Tibial artery (tissue), 4 donors: ENCODE measurements at regions of chr5 and their contacts with region 1.

Region 1: DNA sequence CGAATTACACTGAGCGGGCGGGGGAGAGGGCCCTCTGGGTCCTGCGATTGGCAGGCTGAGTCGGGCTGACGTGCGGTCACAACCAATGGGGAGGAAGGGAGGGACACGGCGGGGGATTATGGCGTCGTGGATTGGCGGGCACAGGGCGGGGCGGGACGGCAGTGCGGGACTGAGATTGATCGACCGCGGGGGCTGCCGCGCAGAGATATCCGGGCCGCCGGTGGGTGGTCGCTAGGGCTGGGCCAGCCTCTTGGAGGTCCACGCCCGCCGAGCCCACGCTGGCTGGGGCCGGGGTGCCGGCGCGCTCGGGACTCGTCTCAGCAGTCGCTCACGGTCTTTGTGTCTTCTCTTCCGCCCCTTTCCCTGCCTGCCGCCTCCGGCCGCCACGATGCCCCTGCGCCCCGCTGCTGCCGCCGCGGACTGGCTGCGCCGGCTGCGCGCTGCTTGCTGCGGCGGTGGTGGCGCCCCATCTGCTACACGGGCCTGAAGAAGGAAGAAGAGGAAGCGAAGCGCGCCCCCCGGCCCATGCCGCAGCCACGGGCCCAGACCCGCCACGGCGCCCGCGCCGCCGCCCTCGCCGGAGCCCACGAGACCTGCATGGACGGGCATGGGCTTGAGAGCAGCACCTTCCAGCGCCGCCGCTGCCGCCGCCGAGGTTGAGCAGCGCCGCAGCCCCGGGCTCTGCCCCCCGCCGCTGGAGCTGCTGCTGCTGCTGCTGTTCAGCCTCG is at the start of gene RGMB:
- DNase-seq: peak; percentile 98 to 99
- H3K4me3 ChIP-seq: peak within 1 kb of the TSS; percentile 65 to 71
- H3K27ac ChIP-seq: peak within 1 kb of the TSS; percentile 85 to 90
- H3K4me1 ChIP-seq: peaks cover 0 to 35% (median 18%) of the 10 kb centered on the region in 4 donors
- H3K27me3 ChIP-seq: no peaks in the 10 kb centered on the region
- CTCF ChIP-seq: peak in 1 of 2 experiments; percentile 24

Region 2: DNA sequence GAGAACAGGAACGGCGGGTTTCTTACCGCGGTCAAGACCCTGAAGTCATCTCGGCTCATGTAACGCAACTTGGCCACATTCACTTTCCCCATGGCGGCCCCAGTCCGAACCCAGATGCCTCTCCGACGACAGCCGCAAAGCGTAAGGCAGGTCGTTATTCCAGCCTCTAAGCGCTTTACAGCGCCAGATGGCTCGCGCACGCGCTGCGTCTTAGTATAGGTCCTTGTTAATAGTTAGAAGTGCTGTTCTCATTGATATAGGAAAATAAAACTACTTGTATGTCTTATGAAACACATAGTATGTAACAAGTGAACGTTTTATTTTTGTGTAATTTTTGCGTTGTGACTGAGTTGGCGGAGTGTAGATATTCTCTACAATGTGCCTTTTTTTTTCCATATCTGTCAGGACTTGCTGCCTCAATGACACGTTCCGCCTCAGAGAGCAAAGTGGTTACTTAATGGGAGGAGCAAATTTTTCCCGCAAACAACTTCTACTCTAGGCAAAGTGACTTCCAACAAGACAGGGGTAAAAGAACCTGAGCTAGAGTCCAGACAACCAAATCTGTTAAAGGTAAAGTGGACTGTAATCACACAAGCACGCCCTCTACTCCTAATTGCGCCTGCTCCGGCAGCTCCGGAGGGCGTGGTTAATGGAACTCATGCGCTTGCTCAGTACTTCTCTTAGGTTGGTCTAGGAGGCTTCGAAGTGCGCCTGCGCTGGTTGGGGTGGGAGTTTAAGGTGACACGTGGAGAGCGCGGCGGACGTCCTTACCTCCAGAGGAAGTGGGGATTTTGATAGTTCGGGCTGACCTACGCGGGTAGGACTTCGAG is 1590.3 kb before region 1 on chr5 and contains the start of gene RIOK2:
- intact Hi-C with region 1: loop called (anchors 5 kb)
- DNase-seq: peak; percentile 92 to 94
- H3K4me3 ChIP-seq: peak within 1 kb of the TSS; percentile 71 to 75
- H3K27ac ChIP-seq: peak within 1 kb of the TSS; percentile 81 to 84
- H3K4me1 ChIP-seq: peaks cover 0 to 29% (median 11%) of the 10 kb centered on the region in 4 donors
- H3K27me3 ChIP-seq: no peaks in the 10 kb centered on the region
- CTCF ChIP-seq: no peak

Region 3: GRCh38 chr5:98588215-98588614 is 185.4 kb before region 1 on chr5:
- intact Hi-C with region 1: no loop called
- DNase-seq: no peak
- H3K4me3 ChIP-seq: no peak overlapping the region
- H3K27ac ChIP-seq: no peak overlapping the region
- H3K4me1 ChIP-seq: no peaks in the 10 kb centered on the region
- H3K27me3 ChIP-seq: no peaks in the 10 kb centered on the region
- CTCF ChIP-seq: no peak

Region 4: GRCh38 chr5:99706160-99706559 is 932.5 kb after region 1 on chr5:
- intact Hi-C with region 1: no loop called
- DNase-seq: no peak
- H3K4me3 ChIP-seq: no peak overlapping the region
- H3K27ac ChIP-seq: no peak overlapping the region
- H3K4me1 ChIP-seq: no peaks in the 10 kb centered on the region
- H3K27me3 ChIP-seq: no peaks in the 10 kb centered on the region
- CTCF ChIP-seq: no peak